ENCODE measurements at regions of chr12 and their contacts with region 1.

Region 1: GRCh38 chr12:76055393-76055792 is 23.8 kb upstream of the PHLDA1 start:
- DNase-seq: no peak
- H3K4me3 ChIP-seq: no peak overlapping the region
- H3K27me3 ChIP-seq: no peaks in the 10 kb centered on the region
- CTCF ChIP-seq: no peak

Region 2: GRCh38 chr12:76685246-76685678 is 629.9 kb after region 1 on chr12:
- CTCF ChIA-PET with region 1: interaction called, 10 read pairs
- POLR2A ChIA-PET with region 1: no interaction called
- DNase-seq: no peak
- H3K4me3 ChIP-seq: no peak overlapping the region
- H3K27me3 ChIP-seq: no peaks in the 10 kb centered on the region
- CTCF ChIP-seq: no peak

Measured in BJ (cell line).